IMR-90 (cell line): ENCODE measurements at regions of chr7 and their contacts with region 1.

Region 1: DNA sequence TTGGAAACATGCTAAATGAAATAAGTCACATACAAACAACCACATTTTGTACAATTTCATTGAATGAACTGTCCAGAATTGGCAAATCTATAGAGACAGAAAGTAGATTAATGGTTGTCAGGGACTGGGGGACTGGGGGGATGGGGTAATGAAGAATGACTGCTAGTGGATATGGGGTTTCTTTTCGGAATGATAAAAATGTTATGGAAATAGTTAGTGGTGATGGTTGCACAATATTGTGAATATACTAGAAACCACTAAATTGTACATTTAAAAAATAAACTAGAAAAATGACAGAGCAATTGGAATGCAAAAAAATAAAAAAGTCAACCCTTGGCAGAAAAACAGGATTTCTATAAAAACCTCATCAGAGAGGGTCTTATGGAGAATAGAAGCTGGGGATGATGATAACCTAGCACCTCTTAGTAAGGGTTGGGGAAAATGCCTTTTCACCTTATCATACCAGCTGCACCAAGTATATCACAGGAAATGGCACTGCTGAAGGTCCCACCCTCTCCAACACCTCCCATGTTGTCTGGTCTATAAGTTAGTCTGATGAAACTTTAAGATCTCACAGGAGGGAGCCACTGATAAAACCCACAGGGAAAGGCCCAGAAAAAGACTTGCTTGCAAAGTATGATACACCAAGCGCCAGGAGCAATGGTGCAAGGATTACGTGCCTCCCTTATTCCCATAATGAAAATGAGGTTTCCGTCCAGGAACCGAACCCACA is 23.1 kb upstream of the JAZF1 start:
- DNase-seq: no peak
- ATAC-seq: peak; percentile 66
- H3K4me3 ChIP-seq: no peak overlapping the region
- H3K27ac ChIP-seq: peak overlapping the region; percentile 2; the same call in 1 of the 2 replicates
- H3K4me1 ChIP-seq: peaks cover 4% of the 10 kb centered on the region
- H3K27me3 ChIP-seq: no peaks in the 10 kb centered on the region
- CTCF ChIP-seq: no peak
- POLR2A ChIP-seq: no peak
- RAD21 ChIP-seq: no peak

Region 2: DNA sequence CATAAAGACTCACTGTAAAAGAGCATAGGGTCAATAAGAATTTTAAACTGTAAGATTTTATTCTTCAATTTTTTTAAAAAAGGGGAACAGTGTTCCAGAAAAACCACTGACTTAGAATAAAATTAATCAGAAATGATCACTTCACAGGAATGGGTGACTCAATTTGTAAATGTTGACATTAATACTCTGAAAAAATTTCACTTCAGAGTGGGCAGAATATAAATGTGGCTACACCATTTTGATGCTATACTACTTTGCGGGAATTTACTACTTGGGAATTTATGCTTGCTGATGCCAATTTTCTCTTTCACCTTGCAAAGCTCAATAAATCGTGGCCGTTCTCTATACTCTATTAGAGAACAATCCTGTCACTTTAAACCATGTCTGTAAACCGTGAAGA is 667.9 kb before region 1 on chr7:
- CTCF ChIA-PET with region 1: no interaction called
- POLR2A ChIA-PET with region 1: no interaction called
- dilution Hi-C with region 1: no loop called
- in situ Hi-C with region 1: no loop called
- intact Hi-C with region 1: no loop called
- DNase-seq: peak; percentile 12
- ATAC-seq: no peak
- H3K4me3 ChIP-seq: no peak overlapping the region
- H3K27ac ChIP-seq: no peak overlapping the region
- H3K4me1 ChIP-seq: peaks cover 11% of the 10 kb centered on the region
- H3K27me3 ChIP-seq: no peaks in the 10 kb centered on the region
- CTCF ChIP-seq: no peak
- POLR2A ChIP-seq: no peak
- RAD21 ChIP-seq: no peak

Region 3: GRCh38 chr7:28144266-28144665 is 59.4 kb before region 1 on chr7:
- CTCF ChIA-PET with region 1: no interaction called
- POLR2A ChIA-PET with region 1: no interaction called
- dilution Hi-C with region 1: no loop called
- in situ Hi-C with region 1: no loop called
- intact Hi-C with region 1: no loop called
- DNase-seq: no peak
- ATAC-seq: no peak
- H3K4me3 ChIP-seq: no peak overlapping the region
- H3K27ac ChIP-seq: no peak overlapping the region
- H3K4me1 ChIP-seq: peaks cover 2% of the 10 kb centered on the region; the same call in 1 of the 2 replicates
- H3K27me3 ChIP-seq: no peaks in the 10 kb centered on the region
- CTCF ChIP-seq: no peak
- POLR2A ChIP-seq: no peak
- RAD21 ChIP-seq: no peak

Region 4: GRCh38 chr7:28192786-28193585 is 10.7 kb before region 1 on chr7:
- CTCF ChIA-PET with region 1: no interaction called
- POLR2A ChIA-PET with region 1: no interaction called
- dilution Hi-C with region 1: no loop called
- in situ Hi-C with region 1: no loop called
- intact Hi-C with region 1: loop called (anchors 1 kb)
- DNase-seq: peak; percentile 45
- ATAC-seq: peak; percentile 87
- H3K4me3 ChIP-seq: no peak overlapping the region
- H3K27ac ChIP-seq: peak overlapping the region; percentile 34; the same call in 1 of the 2 replicates
- H3K4me1 ChIP-seq: peaks cover 10% of the 10 kb centered on the region
- H3K27me3 ChIP-seq: no peaks in the 10 kb centered on the region
- CTCF ChIP-seq: no peak
- POLR2A ChIP-seq: no peak
- RAD21 ChIP-seq: no peak

Region 5: DNA sequence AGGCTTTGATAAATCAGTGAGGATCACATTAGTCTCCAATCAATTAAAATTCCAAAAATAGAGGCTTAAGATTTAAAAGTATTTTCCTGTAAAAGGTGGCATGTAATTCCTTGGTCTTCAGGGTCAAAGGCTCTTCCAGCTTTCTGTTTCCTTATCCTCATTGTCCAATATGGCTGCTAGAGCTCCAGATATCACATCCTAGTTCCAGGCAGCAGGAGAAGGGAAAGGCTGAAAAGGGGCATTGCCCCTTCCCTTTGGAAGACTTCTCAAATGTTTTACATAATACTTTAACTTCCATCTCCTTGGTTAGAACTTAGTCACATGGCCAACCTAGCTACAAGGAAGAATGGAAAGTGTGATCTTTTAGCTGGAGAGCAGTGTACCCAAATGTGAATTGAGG is 16.1 kb after region 1 on chr7:
- CTCF ChIA-PET with region 1: no interaction called
- POLR2A ChIA-PET with region 1: no interaction called
- dilution Hi-C with region 1: no loop called
- in situ Hi-C with region 1: no loop called
- intact Hi-C with region 1: loop called (anchors 1 kb)
- DNase-seq: no peak
- ATAC-seq: no peak
- H3K4me3 ChIP-seq: no peak overlapping the region
- H3K27ac ChIP-seq: no peak overlapping the region
- H3K4me1 ChIP-seq: no peaks in the 10 kb centered on the region
- H3K27me3 ChIP-seq: no peaks in the 10 kb centered on the region; the same call in 1 of the 2 replicates
- CTCF ChIP-seq: no peak
- POLR2A ChIP-seq: no peak
- RAD21 ChIP-seq: no peak

Region 6: GRCh38 chr7:28245123-28245878 is 41.6 kb after region 1 on chr7:
- CTCF ChIA-PET with region 1: no interaction called
- POLR2A ChIA-PET with region 1: no interaction called
- dilution Hi-C with region 1: no loop called
- in situ Hi-C with region 1: no loop called
- intact Hi-C with region 1: loop called (anchors 5 kb)
- DNase-seq: no peak
- ATAC-seq: no peak
- H3K4me3 ChIP-seq: no peak overlapping the region
- H3K27ac ChIP-seq: no peak overlapping the region
- H3K4me1 ChIP-seq: peaks cover 2% of the 10 kb centered on the region; the same call in 1 of the 2 replicates
- H3K27me3 ChIP-seq: no peaks in the 10 kb centered on the region; the same call in 1 of the 2 replicates
- CTCF ChIP-seq: no peak
- POLR2A ChIP-seq: no peak
- RAD21 ChIP-seq: no peak

Region 7: GRCh38 chr7:28623863-28624262 is 420.2 kb after region 1 on chr7:
- CTCF ChIA-PET with region 1: no interaction called
- POLR2A ChIA-PET with region 1: no interaction called
- dilution Hi-C with region 1: no loop called
- in situ Hi-C with region 1: no loop called
- intact Hi-C with region 1: no loop called
- DNase-seq: no peak
- ATAC-seq: no peak
- H3K4me3 ChIP-seq: no peak overlapping the region
- H3K27ac ChIP-seq: no peak overlapping the region
- H3K4me1 ChIP-seq: peaks cover 2% of the 10 kb centered on the region; the same call in 1 of the 2 replicates
- H3K27me3 ChIP-seq: no peaks in the 10 kb centered on the region
- CTCF ChIP-seq: no peak
- POLR2A ChIP-seq: no peak
- RAD21 ChIP-seq: no peak